ENCODE measurements at regions of chr20 and their contacts with region 1.

Region 1: DNA sequence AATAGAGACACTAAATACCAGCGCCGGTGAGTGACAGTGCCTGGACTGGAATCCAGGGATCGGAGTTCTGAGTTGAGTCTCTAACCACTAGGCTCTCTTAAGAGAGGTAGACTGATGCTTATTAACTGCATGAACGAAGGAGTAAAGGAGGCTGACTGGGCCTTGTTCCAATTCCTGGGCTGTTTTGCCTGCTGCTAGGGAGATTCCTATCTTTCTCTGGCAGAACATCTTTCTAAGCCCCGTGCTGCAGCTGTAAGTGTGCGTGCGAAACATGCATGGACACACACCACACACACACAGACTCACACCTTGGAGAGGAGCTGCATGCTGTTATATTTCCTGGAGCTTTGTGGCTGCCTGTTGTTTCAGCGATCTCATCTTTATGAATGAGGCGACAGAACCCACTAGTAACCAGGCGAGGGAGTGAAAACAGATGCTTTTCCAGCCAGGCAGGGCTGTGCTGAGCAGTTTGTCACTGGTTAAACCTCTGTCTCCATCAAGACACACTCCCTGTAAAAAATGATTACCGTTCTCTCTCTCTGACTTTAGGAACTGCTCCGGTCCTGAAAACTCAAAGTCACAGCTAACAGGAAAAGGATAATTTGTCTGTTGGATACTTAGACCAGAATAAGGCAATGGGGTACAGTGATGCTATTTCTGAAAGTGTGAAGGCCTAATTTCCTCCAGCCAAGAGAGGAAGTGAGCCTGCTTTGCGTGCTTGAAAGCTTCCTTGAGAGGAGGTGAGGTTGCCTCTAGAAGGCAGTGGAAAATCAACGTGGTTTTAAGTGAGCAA is 157.4 kb upstream of the ZNF217 start:
- DNase-seq: peak in 4 of 5 donors; percentile 28 to 54 (median 40)
- H3K4me3 ChIP-seq: no peak overlapping the region
- H3K4me3 Mint-ChIP-seq: peak overlapping the region in 7 of 8 donors; percentile 52 to 82 (median 76)
- H3K27ac ChIP-seq: peak overlapping the region; percentile 55
- H3K27ac Mint-ChIP-seq: peak overlapping the region; percentile 86 to 98 (median 95)
- H3K4me1 ChIP-seq: peaks cover 63% of the 10 kb centered on the region
- H3K4me1 Mint-ChIP-seq: peaks cover 48 to 72% (median 63%) of the 10 kb centered on the region in 4 donors
- H3K27me3 ChIP-seq: no peaks in the 10 kb centered on the region
- H3K27me3 Mint-ChIP-seq: no peaks in the 10 kb centered on the region

Region 2: GRCh38 chr20:53594068-53595017 is 156.7 kb before region 1 on chr20:
- CTCF ChIA-PET with region 1: no interaction called
- POLR2A ChIA-PET with region 1: interaction called, 12 read pairs
- intact Hi-C with region 1: no loop called
- DNase-seq: peak; percentile 92 to 99 (median 96)
- H3K4me3 ChIP-seq: peak overlapping the region in 1 of 2 donors; percentile 79
- H3K4me3 Mint-ChIP-seq: peak overlapping the region; percentile 84 to 97 (median 90)
- H3K27ac ChIP-seq: peak overlapping the region; percentile 86
- H3K27ac Mint-ChIP-seq: peak overlapping the region; percentile 95 to 100 (median 97)
- H3K4me1 ChIP-seq: peaks cover 52% of the 10 kb centered on the region
- H3K4me1 Mint-ChIP-seq: peaks cover 41 to 74% (median 51%) of the 10 kb centered on the region in 4 donors
- H3K27me3 ChIP-seq: no peaks in the 10 kb centered on the region
- H3K27me3 Mint-ChIP-seq: no peaks in the 10 kb centered on the region

Region 3: DNA sequence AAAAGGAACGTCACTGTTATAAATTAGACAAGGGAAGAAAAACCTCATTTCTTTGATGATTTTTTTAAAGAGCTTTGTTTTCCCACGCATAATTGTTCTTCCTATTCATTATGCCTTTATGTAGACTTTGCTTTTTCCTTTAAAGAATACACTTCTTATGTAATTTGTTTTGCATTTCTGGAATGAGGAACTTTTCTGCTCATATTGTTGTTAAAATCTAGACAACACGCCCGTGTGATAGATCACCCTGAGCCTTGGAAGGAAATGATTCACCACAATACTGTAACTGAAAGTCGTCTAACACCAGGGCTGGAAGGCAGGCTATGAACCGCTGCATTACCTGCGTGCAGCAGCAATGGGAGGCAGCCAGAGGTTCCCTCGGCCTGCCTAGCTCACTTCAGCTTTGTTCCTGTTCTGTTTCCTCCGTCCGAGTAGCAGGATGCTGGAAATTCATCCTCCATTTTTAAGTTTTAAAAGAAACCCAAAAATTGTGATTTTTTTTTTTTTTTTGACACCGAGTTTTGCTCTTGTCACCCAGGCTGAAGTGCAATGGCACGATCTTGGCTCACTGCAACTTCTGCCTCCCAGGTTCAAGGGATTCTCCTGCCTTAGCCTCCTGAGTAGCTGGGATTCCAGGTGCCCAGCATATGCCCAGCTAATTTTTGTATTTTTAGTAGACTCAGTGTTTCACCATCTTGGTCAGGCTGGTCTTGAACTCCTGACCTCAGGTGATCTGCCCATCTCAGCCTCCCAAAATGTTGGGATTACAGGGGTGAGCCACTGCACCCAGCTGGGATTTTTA is 107.8 kb before region 1 on chr20:
- CTCF ChIA-PET with region 1: interaction called, 3 read pairs
- POLR2A ChIA-PET with region 1: interaction called, 6 read pairs
- intact Hi-C with region 1: loop called (anchors 5 kb)
- DNase-seq: peak; percentile 67 to 84 (median 73)
- H3K4me3 ChIP-seq: peak overlapping the region; percentile 19 to 26
- H3K4me3 Mint-ChIP-seq: peak overlapping the region; percentile 75 to 93 (median 86)
- H3K27ac ChIP-seq: peak overlapping the region; percentile 59
- H3K27ac Mint-ChIP-seq: peak overlapping the region; percentile 94 to 99 (median 98)
- H3K4me1 ChIP-seq: peaks cover 37% of the 10 kb centered on the region
- H3K4me1 Mint-ChIP-seq: peaks cover 14 to 52% (median 37%) of the 10 kb centered on the region in 4 donors
- H3K27me3 ChIP-seq: no peaks in the 10 kb centered on the region
- H3K27me3 Mint-ChIP-seq: no peaks in the 10 kb centered on the region

Region 4: GRCh38 chr20:53708129-53708968 is 42.7 kb before region 1 on chr20:
- CTCF ChIA-PET with region 1: interaction called, 3 read pairs
- POLR2A ChIA-PET with region 1: interaction called, 5 read pairs
- intact Hi-C with region 1: loop called (anchors 5 kb)
- DNase-seq: peak in 4 of 5 donors; percentile 17 to 41 (median 26)
- H3K4me3 ChIP-seq: no peak overlapping the region
- H3K4me3 Mint-ChIP-seq: peak overlapping the region in 7 of 8 donors; percentile 31 to 91 (median 69)
- H3K27ac ChIP-seq: peak overlapping the region; percentile 3
- H3K27ac Mint-ChIP-seq: peak overlapping the region; percentile 76 to 98 (median 92)
- H3K4me1 ChIP-seq: peaks cover 39% of the 10 kb centered on the region
- H3K4me1 Mint-ChIP-seq: peaks cover 31 to 47% (median 36%) of the 10 kb centered on the region in 4 donors
- H3K27me3 ChIP-seq: no peaks in the 10 kb centered on the region
- H3K27me3 Mint-ChIP-seq: no peaks in the 10 kb centered on the region

Region 5: GRCh38 chr20:53786071-53786444 is 35.0 kb after region 1 on chr20:
- CTCF ChIA-PET with region 1: no interaction called
- POLR2A ChIA-PET with region 1: no interaction called
- intact Hi-C with region 1: no loop called
- DNase-seq: no peak
- H3K4me3 ChIP-seq: no peak overlapping the region
- H3K4me3 Mint-ChIP-seq: no peak overlapping the region
- H3K27ac ChIP-seq: no peak overlapping the region
- H3K27ac Mint-ChIP-seq: no peak overlapping the region
- H3K4me1 ChIP-seq: no peaks in the 10 kb centered on the region
- H3K4me1 Mint-ChIP-seq: peaks cover 2 to 9% (median 4%) of the 10 kb centered on the region in 4 donors
- H3K27me3 ChIP-seq: no peaks in the 10 kb centered on the region
- H3K27me3 Mint-ChIP-seq: no peaks in the 10 kb centered on the region

Region 6: GRCh38 chr20:53828682-53829254 is 77.7 kb after region 1 on chr20:
- CTCF ChIA-PET with region 1: no interaction called
- POLR2A ChIA-PET with region 1: interaction called, 6 read pairs
- intact Hi-C with region 1: loop called (anchors 5 kb)
- DNase-seq: no peak
- H3K4me3 ChIP-seq: peak overlapping the region; percentile 54 to 60
- H3K4me3 Mint-ChIP-seq: peak overlapping the region; percentile 80 to 97 (median 89)
- H3K27ac ChIP-seq: peak overlapping the region; percentile 51
- H3K27ac Mint-ChIP-seq: peak overlapping the region; percentile 71 to 95 (median 93)
- H3K4me1 ChIP-seq: peaks cover 41% of the 10 kb centered on the region
- H3K4me1 Mint-ChIP-seq: peaks cover 24 to 59% (median 43%) of the 10 kb centered on the region in 4 donors
- H3K27me3 ChIP-seq: no peaks in the 10 kb centered on the region
- H3K27me3 Mint-ChIP-seq: no peaks in the 10 kb centered on the region

Measured in CD4-positive, alpha-beta memory T cell (primary cell).